ENCODE measurements at regions of chr5 and their contacts with region 1.

Region 1: GRCh38 chr5:142548739-142549275 is 137.1 kb downstream of the FGF1 start:
- DNase-seq: peak; percentile 62
- H3K4me3 ChIP-seq: no peak overlapping the region
- H3K27ac ChIP-seq: no peak overlapping the region
- H3K4me1 ChIP-seq: no peaks in the 10 kb centered on the region
- H3K27me3 ChIP-seq: no peaks in the 10 kb centered on the region
- CTCF ChIP-seq: peak; percentile 42 to 83 (median 75)
- POLR2A ChIP-seq: no peak

Region 2: GRCh38 chr5:142151436-142152383 is 397.1 kb before region 1 on chr5:
- intact Hi-C with region 1: loop called (anchors 2 kb)
- DNase-seq: peak; percentile 57
- H3K4me3 ChIP-seq: no peak overlapping the region
- H3K27ac ChIP-seq: no peak overlapping the region
- H3K4me1 ChIP-seq: no peaks in the 10 kb centered on the region
- H3K27me3 ChIP-seq: no peaks in the 10 kb centered on the region
- CTCF ChIP-seq: peak; percentile 64 to 90 (median 86)
- POLR2A ChIP-seq: no peak

Region 3: DNA sequence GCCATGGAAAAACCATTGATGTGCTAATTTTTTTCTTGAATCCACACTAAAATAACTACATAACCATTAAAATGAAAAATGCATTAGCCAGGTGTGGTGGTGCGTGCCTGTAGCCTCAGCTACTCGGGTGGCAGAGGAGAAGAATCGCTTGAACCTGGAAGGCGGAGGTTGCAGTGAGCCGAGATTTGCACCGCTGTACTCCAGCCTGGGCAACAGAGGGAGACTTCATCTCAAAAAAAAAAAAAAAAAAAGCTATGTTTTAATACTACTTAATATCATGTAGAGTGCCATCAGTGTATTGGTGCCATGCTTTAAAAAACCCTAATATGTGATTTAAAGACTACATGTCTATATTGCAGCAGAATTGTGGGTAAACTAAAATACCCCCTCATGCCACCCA is 381.3 kb before region 1 on chr5:
- intact Hi-C with region 1: loop called (anchors 5 kb)
- DNase-seq: no peak
- H3K4me3 ChIP-seq: no peak overlapping the region
- H3K27ac ChIP-seq: no peak overlapping the region
- H3K4me1 ChIP-seq: no peaks in the 10 kb centered on the region
- H3K27me3 ChIP-seq: no peaks in the 10 kb centered on the region
- CTCF ChIP-seq: no peak
- POLR2A ChIP-seq: no peak

Region 4: GRCh38 chr5:142324871-142325724 is 223.7 kb before region 1 on chr5 and contains the start of gene SPRY4:
- intact Hi-C with region 1: loop called (anchors 10 kb)
- DNase-seq: peak; percentile 92
- H3K4me3 ChIP-seq: peak within 1 kb of the TSS; percentile 52 to 53
- H3K27ac ChIP-seq: peak within 1 kb of the TSS; percentile 75 to 77
- H3K4me1 ChIP-seq: no peaks in the 10 kb centered on the region
- H3K27me3 ChIP-seq: no peaks in the 10 kb centered on the region
- CTCF ChIP-seq: peak in 2 of 4 experiments; percentile 18 to 22
- POLR2A ChIP-seq: peak; percentile 76
- total RNA-seq, gene SPRY4: 7.5 to 11.5 TPM

Measured in prostate gland (tissue), 2 donors.